Dendritic cell treated with granulocyte-macrophage colony-stimulating factor and Interleukin-4, amounts not matched to agents 40 ng/mL and 50 ng/mL, for 4 days (primary cell): ENCODE measurements at regions of chr15 and their contacts with region 1.

Region 1: GRCh38 chr15:41660235-41661077 is at the start of gene MGA:
- H3K4me3 Mint-ChIP-seq: peak within 1 kb of the TSS; percentile 85
- H3K27ac Mint-ChIP-seq: peak within 1 kb of the TSS; percentile 96
- H3K4me1 Mint-ChIP-seq: peaks cover 31% of the 10 kb centered on the region
- H3K27me3 Mint-ChIP-seq: peaks cover 5% of the 10 kb centered on the region

Region 2: DNA sequence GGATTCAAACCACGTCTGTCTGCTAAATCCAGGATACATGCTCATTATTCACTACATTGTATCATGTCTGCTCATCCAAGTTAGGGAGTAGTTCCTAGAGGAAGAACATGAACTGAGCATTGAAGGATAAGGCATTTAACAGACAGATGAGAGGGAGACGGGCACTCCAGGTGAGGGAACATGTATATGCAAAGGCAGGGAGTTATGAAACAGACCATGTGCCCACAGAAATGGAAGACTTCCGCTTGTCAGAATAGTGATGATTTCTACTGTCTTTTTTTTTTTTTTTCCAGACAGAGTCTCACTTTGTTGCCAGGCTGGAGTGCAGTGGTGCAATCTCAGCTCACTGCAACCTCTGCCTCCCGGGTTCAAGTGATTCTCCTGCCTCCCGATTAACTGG is 253.1 kb before region 1 on chr15:
- intact Hi-C with region 1: no loop called
- H3K4me3 Mint-ChIP-seq: no peak overlapping the region
- H3K27ac Mint-ChIP-seq: no peak overlapping the region
- H3K4me1 Mint-ChIP-seq: peaks cover 47% of the 10 kb centered on the region
- H3K27me3 Mint-ChIP-seq: no peaks in the 10 kb centered on the region

Region 3: GRCh38 chr15:41523097-41523496 is 137.4 kb before region 1 on chr15:
- intact Hi-C with region 1: no loop called
- H3K4me3 Mint-ChIP-seq: no peak overlapping the region
- H3K27ac Mint-ChIP-seq: no peak overlapping the region
- H3K4me1 Mint-ChIP-seq: peaks cover 5% of the 10 kb centered on the region
- H3K27me3 Mint-ChIP-seq: no peaks in the 10 kb centered on the region

Region 4: DNA sequence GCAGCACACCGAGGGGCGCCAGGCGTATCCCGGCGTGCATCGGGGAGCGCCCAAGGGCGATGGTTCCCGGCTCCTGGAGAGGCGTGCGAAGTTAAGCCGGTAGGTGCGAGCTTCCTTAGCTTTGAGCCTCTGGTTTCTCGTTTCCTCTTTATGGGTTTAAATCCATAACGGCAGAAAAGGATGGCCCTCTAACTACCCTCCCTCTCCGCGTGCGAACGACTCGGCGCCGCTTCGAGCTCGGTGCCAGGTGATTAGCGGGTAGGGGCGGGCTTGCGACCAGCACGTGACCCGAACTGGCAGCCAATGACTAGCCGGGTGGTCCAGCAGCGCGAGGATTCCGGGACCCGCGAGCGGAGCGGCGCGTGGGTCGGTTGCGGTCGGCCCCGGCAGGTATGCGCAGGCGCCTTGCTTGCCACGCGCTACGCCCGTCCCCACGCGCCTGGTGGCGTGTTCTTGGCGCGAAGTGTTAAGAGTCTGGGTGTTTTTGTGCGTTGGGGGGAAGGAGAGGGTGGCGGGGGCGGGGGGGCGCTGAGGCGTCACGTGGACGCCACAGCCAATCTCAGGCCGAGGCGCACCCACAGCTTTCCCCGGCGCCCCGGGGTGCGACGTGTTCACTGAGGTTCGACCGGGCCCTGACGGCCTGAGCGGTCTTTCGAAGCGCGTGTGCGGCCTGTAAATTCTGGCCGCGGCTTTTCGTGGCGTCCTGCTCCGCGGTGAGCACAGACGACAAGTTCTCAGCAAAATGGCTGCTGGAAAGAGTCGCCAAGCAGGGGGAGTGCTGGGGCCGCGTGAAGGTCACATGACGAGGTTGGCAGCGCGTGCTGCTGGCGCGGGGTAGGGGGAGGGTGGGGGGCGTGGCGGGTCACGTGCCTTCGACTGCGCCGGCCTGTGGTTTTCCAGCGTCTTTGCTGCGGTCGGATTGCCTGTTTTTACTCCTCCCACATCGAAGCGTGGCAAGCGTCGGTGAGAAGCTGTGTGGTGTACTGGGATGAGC is 39.0 kb before region 1 on chr15:
- intact Hi-C with region 1: loop called (anchors 1 kb)
- H3K4me3 Mint-ChIP-seq: peak overlapping the region; percentile 90
- H3K27ac Mint-ChIP-seq: peak overlapping the region; percentile 97
- H3K4me1 Mint-ChIP-seq: peaks cover 17% of the 10 kb centered on the region
- H3K27me3 Mint-ChIP-seq: peaks cover 15% of the 10 kb centered on the region